Upper lobe of right lung (tissue), 1 donor: ENCODE measurements at regions of chr3 and their contacts with region 1.

Region 1: DNA sequence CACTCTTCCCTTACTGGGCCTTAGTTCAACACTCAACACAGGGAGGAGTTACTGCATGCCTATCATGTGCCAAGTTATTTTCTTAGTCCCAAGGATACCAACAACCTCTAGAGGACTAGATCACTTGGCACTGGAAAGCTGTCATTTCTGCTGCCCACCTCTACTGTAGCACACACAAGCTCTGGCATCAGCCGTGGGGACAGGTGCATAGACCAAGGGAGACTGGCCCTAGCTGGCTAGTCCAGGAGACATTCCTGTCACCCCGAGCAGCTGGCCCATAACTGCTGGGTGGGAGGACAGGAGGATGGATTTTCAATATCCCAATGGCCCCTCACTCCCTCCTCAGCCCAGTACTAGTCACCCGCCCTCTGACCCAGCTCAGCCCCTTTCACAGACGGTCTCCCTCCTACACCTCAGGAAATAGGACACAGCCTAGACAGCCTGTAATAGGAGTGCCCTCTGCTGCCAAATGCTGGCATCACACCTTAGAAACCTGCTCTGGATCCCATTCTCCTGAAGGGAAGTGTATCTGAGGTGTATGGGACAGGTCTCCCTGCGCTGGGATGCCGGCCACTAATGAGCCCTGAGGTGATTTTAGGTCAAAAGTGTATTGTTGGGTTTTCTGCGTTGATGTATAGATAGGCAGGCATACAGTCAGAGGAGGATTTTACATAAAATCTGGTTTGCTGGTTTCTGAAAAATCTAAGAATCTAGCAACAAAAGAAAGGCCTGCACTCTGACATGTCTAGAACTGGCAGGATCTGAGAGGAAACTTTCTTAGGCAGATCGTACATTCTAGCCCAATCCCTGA is 3.4 kb upstream of the DZIP1L start:
- DNase-seq: peak; percentile 77
- ATAC-seq: peak; percentile 82
- H3K4me3 ChIP-seq: no peak overlapping the region
- H3K27ac ChIP-seq: peak overlapping the region; percentile 27
- H3K4me1 ChIP-seq: peaks cover 10% of the 10 kb centered on the region
- H3K27me3 ChIP-seq: no peaks in the 10 kb centered on the region
- CTCF ChIP-seq: peak; percentile 80

Region 2: DNA sequence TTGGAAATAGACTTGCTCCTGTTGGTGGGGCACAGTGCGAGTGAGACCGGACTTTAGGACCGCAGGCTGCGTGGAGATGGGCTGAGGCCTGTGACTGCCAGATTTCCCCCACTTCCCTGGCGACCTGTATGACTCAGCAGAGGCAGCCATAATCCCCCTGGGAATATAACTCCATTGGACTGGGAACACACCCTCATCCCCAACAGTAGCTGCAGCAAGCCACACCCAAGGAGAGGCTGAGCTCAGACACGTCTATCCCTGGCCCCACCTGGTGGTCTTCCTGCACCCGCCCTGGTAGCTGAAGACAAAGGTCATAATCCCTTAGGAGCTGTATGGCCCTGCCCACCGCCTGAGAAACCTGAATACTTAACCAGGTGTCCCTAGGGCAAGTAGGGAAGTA is 46.0 kb before region 1 on chr3:
- intact Hi-C with region 1: loop called (anchors 5 kb)
- DNase-seq: no peak
- ATAC-seq: no peak
- H3K4me3 ChIP-seq: no peak overlapping the region
- H3K27ac ChIP-seq: no peak overlapping the region
- H3K4me1 ChIP-seq: no peaks in the 10 kb centered on the region
- H3K27me3 ChIP-seq: no peaks in the 10 kb centered on the region
- CTCF ChIP-seq: no peak

Region 3: DNA sequence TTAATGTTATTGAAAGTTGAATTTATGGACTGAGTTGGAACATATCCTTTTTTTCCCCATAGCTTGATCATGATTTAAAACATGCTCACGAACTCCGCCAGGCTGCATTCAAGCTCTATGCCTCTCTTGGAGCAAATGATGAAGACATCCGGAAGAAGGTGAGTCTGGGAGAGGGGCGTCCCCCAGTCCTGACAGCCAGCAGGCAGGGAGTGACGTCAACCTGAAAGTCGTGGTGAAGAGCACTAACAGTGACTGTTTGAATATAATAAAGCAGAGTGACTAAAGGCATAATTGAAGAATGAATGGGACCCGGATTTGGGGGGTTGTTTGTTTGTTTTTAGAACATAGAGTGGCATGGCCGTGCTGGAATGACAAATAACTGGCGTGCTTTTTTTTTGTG is 126.2 kb after region 1 on chr3:
- intact Hi-C with region 1: no loop called
- DNase-seq: no peak
- ATAC-seq: no peak
- H3K4me3 ChIP-seq: no peak overlapping the region
- H3K27ac ChIP-seq: no peak overlapping the region
- H3K4me1 ChIP-seq: no peaks in the 10 kb centered on the region
- H3K27me3 ChIP-seq: no peaks in the 10 kb centered on the region
- CTCF ChIP-seq: no peak

Region 4: DNA sequence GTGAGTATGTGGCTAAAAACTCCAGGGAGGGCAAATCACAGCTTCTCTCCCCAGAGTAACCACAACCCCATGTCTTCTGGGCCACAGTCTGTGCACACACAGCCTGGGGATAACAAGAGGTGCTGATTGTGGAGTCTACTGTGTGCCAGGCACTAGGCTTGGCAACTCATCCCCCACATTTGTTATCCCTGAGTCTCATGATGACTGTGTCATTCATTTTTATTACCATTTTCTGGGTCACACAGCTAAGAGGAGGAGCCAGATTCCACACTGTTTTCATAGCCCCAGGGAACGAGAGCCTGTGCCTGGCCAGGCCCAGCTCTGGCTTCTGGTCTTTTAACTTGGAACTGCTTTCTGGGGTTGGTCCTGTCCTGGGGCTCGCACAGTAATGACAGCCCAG is 350.1 kb after region 1 on chr3:
- intact Hi-C with region 1: no loop called
- DNase-seq: no peak
- ATAC-seq: no peak
- H3K4me3 ChIP-seq: no peak overlapping the region
- H3K27ac ChIP-seq: peak overlapping the region; percentile 72
- H3K4me1 ChIP-seq: peaks cover 14% of the 10 kb centered on the region
- H3K27me3 ChIP-seq: no peaks in the 10 kb centered on the region
- CTCF ChIP-seq: no peak